CD8-positive, alpha-beta T cell (primary cell): ENCODE measurements at regions of chr16 and their contacts with region 1.

Region 1: DNA sequence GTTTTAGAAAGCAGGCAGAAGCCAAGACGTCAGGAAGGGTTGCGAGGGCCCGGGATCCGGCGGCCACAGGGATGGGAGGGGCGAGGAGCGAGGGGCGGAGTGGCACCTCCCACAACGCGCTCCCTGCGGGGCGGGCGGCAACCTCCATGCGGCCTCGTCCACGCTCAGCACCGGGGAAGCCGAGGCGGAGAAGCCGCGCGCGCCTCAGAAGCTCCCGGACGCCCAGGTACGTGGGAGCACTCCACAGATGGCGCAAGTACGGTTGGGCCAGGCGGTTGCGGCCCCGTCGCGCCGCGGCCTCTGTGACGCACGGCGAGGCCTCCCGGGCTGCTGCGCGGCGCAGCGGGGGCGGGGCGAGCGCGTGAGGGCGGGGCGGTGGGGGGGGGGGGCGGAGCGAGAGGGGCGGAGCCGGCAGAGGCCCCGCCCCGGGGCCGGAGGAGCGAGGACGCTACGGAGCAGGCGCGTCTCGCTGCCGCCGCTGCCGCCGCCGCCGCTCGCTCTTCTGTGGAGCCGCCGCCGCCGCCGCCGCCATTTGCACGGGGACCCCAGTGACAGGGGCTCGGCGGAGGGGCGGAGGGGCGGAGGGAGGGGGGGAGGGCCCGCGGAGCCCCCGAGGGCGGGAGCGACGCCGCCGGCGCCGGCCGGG is at the start of gene TENT4B:
- DNase-seq: peak; percentile 82 to 96 (median 91)
- ATAC-seq: peak; percentile 77
- H3K4me3 ChIP-seq: peak within 1 kb of the TSS; percentile 67 to 79
- H3K4me3 Mint-ChIP-seq: peak within 1 kb of the TSS; percentile 93
- H3K27ac ChIP-seq: peak within 1 kb of the TSS; percentile 93
- H3K27ac Mint-ChIP-seq: peak within 1 kb of the TSS; percentile 95
- H3K4me1 ChIP-seq: peaks cover 40% of the 10 kb centered on the region
- H3K4me1 Mint-ChIP-seq: peaks cover 37% of the 10 kb centered on the region
- H3K27me3 ChIP-seq: no peaks in the 10 kb centered on the region
- H3K27me3 Mint-ChIP-seq: no peaks in the 10 kb centered on the region
- CTCF ChIP-seq: no peak
- total RNA-seq, gene TENT4B: 60.2 to 62.1 TPM

Region 2: GRCh38 chr16:48609652-48610029 is 1543.3 kb before region 1 on chr16:
- CTCF ChIA-PET with region 1: no interaction called
- POLR2A ChIA-PET with region 1: no interaction called
- intact Hi-C with region 1: loop called in 1 of 2 experiments (anchors 10 kb)
- DNase-seq: no peak
- ATAC-seq: peak; percentile 17
- H3K4me3 ChIP-seq: peak overlapping the region; percentile 81 to 88
- H3K4me3 Mint-ChIP-seq: peak overlapping the region; percentile 86
- H3K27ac ChIP-seq: peak overlapping the region; percentile 72 to 87
- H3K27ac Mint-ChIP-seq: peak overlapping the region; percentile 94
- H3K4me1 ChIP-seq: peaks cover 79% of the 10 kb centered on the region
- H3K4me1 Mint-ChIP-seq: peaks cover 40% of the 10 kb centered on the region
- H3K27me3 ChIP-seq: no peaks in the 10 kb centered on the region
- H3K27me3 Mint-ChIP-seq: no peaks in the 10 kb centered on the region
- CTCF ChIP-seq: no peak

Region 3: DNA sequence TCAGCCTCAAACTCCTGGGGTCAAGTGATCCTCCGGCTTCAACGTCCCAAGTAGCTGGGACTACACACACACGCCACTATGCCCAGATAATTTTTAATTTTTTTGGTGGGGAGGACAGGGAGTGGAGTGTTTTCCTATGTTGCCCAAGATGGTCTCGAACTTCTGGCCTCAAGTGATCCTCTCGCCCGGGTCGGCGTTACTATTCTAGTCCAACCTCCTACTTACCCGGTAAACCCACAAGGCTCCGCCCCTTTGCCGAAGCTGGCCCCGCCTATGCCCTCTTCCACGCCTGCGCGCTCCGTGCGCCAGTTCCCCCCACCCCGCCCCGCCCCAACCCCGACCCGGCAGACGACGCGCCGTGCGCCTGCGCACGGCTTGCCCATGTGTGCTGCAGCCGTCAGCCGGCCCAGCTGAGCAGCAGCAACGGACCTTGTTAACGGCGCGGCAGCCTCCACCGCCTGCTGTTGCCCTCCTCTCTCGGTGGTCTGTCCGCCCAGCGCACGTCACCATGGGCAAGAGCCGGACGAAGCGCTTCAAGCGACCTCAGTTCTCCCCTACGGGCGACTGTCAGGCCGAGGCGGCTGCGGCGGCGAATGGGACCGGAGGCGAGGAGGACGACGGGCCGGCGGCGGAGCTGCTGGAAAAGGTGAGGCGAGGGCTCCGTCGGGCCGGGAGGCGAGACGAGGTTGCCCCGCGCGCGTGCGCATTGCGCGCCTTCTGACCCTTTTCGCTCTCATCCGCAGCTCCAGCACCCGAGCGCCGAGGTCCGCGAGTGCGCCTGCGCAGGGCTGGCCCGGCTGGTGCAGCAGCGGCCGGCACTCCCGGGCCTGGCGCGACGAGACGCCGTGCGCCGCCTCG is 87.1 kb before region 1 on chr16 and contains the start of gene HEATR3:
- CTCF ChIA-PET with region 1: interaction called, 5 read pairs
- POLR2A ChIA-PET with region 1: interaction called, 7 read pairs
- intact Hi-C with region 1: loop called (anchors 1 to 2 kb)
- DNase-seq: peak; percentile 88 to 97 (median 93)
- ATAC-seq: peak; percentile 86
- H3K4me3 ChIP-seq: peak within 1 kb of the TSS; percentile 78 to 92
- H3K4me3 Mint-ChIP-seq: peak within 1 kb of the TSS; percentile 93
- H3K27ac ChIP-seq: peak within 1 kb of the TSS; percentile 73 to 79
- H3K27ac Mint-ChIP-seq: peak within 1 kb of the TSS; percentile 92
- H3K4me1 ChIP-seq: peaks cover 17% of the 10 kb centered on the region
- H3K4me1 Mint-ChIP-seq: peaks cover 42% of the 10 kb centered on the region
- H3K27me3 ChIP-seq: no peaks in the 10 kb centered on the region
- H3K27me3 Mint-ChIP-seq: no peaks in the 10 kb centered on the region
- CTCF ChIP-seq: no peak
- total RNA-seq, gene HEATR3: 9.3 to 11.4 TPM

Region 4: DNA sequence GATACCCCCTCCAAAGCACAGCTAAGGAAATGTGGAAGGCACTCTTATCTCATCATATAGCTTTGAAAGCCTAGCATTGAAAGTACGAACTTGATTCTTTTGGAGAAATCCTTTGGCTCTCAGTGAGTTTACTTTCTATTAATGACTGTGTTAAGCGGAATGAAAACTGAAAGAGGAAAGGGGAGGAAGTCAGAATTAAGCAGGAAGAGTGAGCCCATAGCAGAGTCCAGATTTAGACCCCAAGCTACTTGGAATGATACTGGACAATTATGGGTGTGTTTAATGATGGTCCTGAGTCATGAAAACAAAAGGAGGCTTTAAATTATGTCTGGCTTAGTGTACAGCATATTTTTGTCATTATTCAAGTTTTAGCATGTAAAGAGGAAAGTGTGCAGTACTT is 42.3 kb after region 1 on chr16:
- CTCF ChIA-PET with region 1: no interaction called
- POLR2A ChIA-PET with region 1: interaction called, 3 read pairs
- intact Hi-C with region 1: loop called in 1 of 2 experiments (anchors 5 kb)
- DNase-seq: no peak
- ATAC-seq: no peak
- H3K4me3 ChIP-seq: no peak overlapping the region
- H3K4me3 Mint-ChIP-seq: no peak overlapping the region
- H3K27ac ChIP-seq: peak overlapping the region in 1 of 2 experiments; percentile 24
- H3K27ac Mint-ChIP-seq: peak overlapping the region; percentile 14
- H3K4me1 ChIP-seq: peaks cover 26% of the 10 kb centered on the region
- H3K4me1 Mint-ChIP-seq: peaks cover 72% of the 10 kb centered on the region
- H3K27me3 ChIP-seq: no peaks in the 10 kb centered on the region
- H3K27me3 Mint-ChIP-seq: no peaks in the 10 kb centered on the region
- CTCF ChIP-seq: no peak

Region 5: DNA sequence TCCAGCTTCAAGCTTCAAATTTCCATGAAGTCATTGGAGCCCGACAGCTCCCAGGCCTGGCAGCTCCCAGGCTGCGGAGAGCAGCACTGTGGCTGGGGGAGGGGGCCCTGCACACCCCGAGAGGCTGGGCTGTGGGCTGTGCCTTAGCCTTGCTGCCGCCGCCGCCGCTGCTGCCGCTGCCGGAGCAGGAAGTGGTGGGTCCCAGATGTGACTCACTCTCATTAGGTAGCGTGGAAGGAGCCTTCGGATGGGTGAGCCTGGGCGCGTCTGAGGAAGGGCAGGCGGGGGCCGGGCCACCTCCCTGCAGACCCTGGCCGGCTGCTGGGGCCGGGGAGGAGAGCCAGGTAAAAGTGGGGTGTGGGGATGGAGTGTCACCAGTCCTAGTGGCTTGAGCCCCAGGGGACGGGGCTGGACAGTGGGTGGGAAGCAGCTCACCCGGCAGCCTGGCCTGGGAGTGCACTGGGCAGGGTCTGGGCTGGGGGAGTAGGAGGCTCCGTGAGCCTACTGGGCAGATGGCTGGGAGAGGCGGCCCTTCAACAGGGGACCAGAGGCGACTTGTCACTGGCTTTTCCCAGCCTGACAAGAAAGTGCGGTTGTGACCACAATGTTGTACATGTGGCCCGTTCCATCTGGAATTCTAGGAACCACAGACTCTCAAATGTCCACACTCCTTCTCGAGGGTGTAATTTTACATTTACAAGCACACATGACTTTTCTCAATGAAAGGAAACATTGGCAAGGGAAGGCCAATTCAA is 113.6 kb after region 1 on chr16 and contains the start of gene ADCY7:
- CTCF ChIA-PET with region 1: no interaction called
- POLR2A ChIA-PET with region 1: no interaction called
- intact Hi-C with region 1: loop called (anchors 2 to 5 kb)
- DNase-seq: peak; percentile 58 to 90 (median 88)
- ATAC-seq: peak; percentile 83
- H3K4me3 ChIP-seq: peak within 1 kb of the TSS; percentile 91 to 94
- H3K4me3 Mint-ChIP-seq: peak within 1 kb of the TSS; percentile 97
- H3K27ac ChIP-seq: peak within 1 kb of the TSS; percentile 77 to 86
- H3K27ac Mint-ChIP-seq: peak within 1 kb of the TSS; percentile 98
- H3K4me1 ChIP-seq: peaks cover 68% of the 10 kb centered on the region
- H3K4me1 Mint-ChIP-seq: peaks cover 71% of the 10 kb centered on the region
- H3K27me3 ChIP-seq: no peaks in the 10 kb centered on the region
- H3K27me3 Mint-ChIP-seq: no peaks in the 10 kb centered on the region
- CTCF ChIP-seq: no peak
- total RNA-seq, gene ADCY7: 117 to 126 TPM

Region 6: GRCh38 chr16:50368410-50369132 is 215.6 kb after region 1 on chr16 and contains the start of gene BRD7:
- CTCF ChIA-PET with region 1: no interaction called
- POLR2A ChIA-PET with region 1: no interaction called
- intact Hi-C with region 1: loop called (anchors 2 kb)
- DNase-seq: peak; percentile 60 to 88 (median 71)
- ATAC-seq: peak; percentile 94
- H3K4me3 ChIP-seq: peak within 1 kb of the TSS; percentile 54 to 60
- H3K4me3 Mint-ChIP-seq: peak within 1 kb of the TSS; percentile 85
- H3K27ac ChIP-seq: peak within 1 kb of the TSS; percentile 56 to 79
- H3K27ac Mint-ChIP-seq: peak within 1 kb of the TSS; percentile 95
- H3K4me1 ChIP-seq: peaks cover 41% of the 10 kb centered on the region
- H3K4me1 Mint-ChIP-seq: peaks cover 52% of the 10 kb centered on the region
- H3K27me3 ChIP-seq: no peaks in the 10 kb centered on the region
- H3K27me3 Mint-ChIP-seq: no peaks in the 10 kb centered on the region
- CTCF ChIP-seq: no peak
- total RNA-seq, gene BRD7: 113 to 117 TPM

Region 7: DNA sequence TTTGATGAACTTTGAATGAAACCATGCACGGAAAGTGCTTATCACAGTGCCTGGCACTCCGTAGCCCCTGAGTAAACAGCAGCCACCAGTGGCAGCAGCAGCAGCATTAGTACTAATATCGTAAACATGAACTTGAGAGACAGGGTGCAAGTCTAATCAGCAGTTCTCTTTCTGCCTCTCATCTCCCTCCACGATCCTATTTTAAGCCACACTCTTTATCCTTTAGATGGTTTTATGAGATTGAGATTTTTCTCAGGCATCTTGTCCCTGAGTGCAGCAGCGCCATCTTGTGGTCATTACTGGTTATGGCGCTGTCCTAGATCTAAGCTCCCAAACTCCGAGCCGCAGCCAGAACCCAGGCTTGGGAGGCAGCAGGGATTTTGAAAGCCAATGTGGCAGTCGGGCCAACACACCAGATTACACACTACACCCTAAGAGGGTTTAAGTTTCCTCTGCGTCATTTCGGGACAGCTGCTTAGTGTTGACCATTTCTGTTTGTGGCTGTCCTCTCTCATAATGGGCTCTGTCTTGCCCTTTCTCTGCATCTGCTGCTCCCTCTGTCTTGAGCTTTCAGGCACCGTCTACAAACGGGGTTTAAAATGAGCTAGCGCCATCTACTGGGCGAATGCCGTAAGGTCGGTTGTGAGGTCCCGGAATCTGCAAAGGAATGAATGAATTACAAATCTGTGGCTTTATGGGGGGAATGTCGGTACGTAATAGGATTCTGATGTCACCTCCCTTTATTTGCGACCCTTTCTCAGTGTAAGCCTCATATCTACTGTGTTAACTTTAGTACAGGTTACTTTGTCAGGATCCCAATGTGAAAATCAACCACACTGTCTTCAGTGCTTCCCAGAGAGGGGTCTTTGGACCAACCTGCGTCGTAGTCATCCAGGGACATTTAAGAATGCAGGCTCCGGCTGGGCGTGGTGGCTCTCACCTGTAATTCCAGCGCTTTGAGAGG is 653.5 kb after region 1 on chr16:
- CTCF ChIA-PET with region 1: interaction called, 3 read pairs
- POLR2A ChIA-PET with region 1: no interaction called
- intact Hi-C with region 1: loop called in 1 of 2 experiments (anchors 1 kb)
- DNase-seq: peak; percentile 69 to 93 (median 86)
- ATAC-seq: peak; percentile 96
- H3K4me3 ChIP-seq: peak overlapping the region; percentile 36 to 38
- H3K4me3 Mint-ChIP-seq: peak overlapping the region; percentile 81
- H3K27ac ChIP-seq: no peak overlapping the region
- H3K27ac Mint-ChIP-seq: peak overlapping the region; percentile 88
- H3K4me1 ChIP-seq: peaks cover 3% of the 10 kb centered on the region
- H3K4me1 Mint-ChIP-seq: peaks cover 11% of the 10 kb centered on the region
- H3K27me3 ChIP-seq: no peaks in the 10 kb centered on the region
- H3K27me3 Mint-ChIP-seq: no peaks in the 10 kb centered on the region
- CTCF ChIP-seq: peak; percentile 96